Activated CD8-positive, alpha-beta T cell treated with anti-CD3 and anti-CD28 coated beads for 36 hours (primary cell): ENCODE measurements at regions of chr10 and their contacts with region 1.

Region 1: DNA sequence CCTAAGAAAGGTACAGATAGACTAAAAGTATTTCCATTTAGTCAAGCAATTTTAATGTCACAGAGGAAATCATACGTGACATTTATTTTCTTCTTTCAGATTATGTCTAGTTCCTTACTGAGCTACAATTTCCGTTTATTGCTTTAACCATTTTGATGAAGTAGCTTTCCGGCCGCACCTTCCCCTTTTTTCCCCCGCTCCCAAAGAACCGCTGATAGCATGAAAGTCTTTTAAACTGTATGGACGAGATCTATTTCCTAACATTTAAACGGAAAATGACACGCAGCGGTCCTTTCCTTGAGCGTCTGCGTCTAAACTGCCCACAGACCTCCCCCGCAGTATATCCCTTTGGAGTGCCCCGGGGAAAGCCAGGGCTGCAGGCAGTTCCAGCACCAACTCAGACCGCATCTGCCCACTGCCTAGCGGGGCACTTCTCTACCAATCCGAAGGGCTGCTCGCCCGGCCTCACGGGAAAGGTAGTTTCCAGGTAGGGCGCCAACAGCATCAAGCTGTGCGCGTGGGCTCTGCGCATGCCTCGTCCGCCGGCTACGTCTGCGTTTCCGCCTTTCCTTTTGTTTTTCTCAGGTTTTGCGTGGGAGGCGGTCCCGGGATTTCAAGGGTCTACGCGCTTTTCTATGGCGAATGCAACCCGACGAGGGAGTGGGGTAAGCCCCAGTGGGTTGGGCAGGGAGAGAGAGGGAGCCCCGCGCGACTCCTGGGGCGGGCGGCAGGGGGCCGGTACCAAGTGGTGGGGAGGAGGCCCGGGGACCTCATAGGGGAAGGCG is at the start of gene ZNF33A:
- DNase-seq: peak; percentile 94
- ATAC-seq: peak; percentile 86
- H3K4me3 Mint-ChIP-seq: peak within 1 kb of the TSS; percentile 93
- H3K27ac Mint-ChIP-seq: peak within 1 kb of the TSS; percentile 100
- H3K4me1 Mint-ChIP-seq: peaks cover 27% of the 10 kb centered on the region
- H3K27me3 Mint-ChIP-seq: no peaks in the 10 kb centered on the region
- CTCF ChIP-seq: no peak
- total RNA-seq, gene ZNF33A: 21.2 to 27.1 TPM

Region 2: DNA sequence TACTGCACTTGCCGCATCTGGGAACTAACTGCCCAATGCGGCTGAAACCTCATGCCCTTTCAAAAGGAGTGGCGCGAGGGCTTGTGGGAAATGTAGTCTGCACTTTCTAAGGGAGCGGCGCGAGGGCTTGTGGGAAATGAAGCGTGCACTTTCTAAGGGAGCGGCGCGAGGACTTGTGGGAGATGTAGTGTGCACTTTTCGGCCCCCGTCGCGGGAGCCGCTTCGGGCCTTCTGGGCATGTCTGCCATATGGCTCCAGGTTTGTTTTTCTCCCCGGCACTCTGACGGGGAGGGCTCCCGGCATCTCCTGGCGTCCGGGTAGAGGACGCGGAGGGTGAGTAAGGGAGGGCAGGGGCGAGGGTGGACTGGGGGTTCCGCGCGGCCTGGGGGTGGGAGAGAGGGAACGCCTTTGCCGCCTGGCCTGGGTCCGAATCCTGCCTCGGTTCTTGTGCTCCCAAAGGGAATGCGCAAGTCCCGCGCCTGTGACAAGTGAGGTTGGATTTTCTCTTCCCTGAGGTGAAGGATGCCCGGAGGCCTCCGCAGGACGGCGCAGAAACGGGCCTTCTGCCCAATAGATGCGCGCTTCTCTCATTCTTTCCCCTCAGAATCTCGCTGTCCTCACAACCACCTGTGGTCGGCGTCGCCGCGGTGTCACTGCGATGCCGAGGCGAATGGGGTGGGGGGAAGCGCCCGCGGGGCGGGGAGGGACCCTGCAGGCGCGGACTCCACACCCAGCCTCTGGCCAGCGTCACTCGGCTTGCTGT is 84.0 kb after region 1 on chr10 and contains the start of gene ZNF37A:
- CTCF ChIA-PET with region 1: no interaction called
- POLR2A ChIA-PET with region 1: interaction called, 3 read pairs
- intact Hi-C with region 1: loop called (anchors 1 kb)
- DNase-seq: peak; percentile 96
- ATAC-seq: peak; percentile 96
- H3K4me3 Mint-ChIP-seq: peak within 1 kb of the TSS; percentile 71
- H3K27ac Mint-ChIP-seq: peak within 1 kb of the TSS; percentile 90
- H3K4me1 Mint-ChIP-seq: peaks cover 28% of the 10 kb centered on the region
- H3K27me3 Mint-ChIP-seq: no peaks in the 10 kb centered on the region
- CTCF ChIP-seq: no peak
- total RNA-seq, gene ZNF37A: 22.6 to 26.0 TPM